ENCODE measurements at regions of chr5 and their contacts with region 1.

Region 1: GRCh38 chr5:98614341-98614740 is 159.1 kb upstream of the RGMB start:
- DNase-seq: no peak
- H3K4me3 ChIP-seq: no peak overlapping the region
- H3K27ac ChIP-seq: no peak overlapping the region
- H3K4me1 ChIP-seq: no peaks in the 10 kb centered on the region
- H3K27me3 ChIP-seq: no peaks in the 10 kb centered on the region
- CTCF ChIP-seq: no peak
- POLR2A ChIP-seq: no peak

Region 2: GRCh38 chr5:97425511-97425910 is 1188.8 kb before region 1 on chr5:
- CTCF ChIA-PET with region 1: no interaction called
- POLR2A ChIA-PET with region 1: no interaction called
- dilution Hi-C with region 1: no loop called
- intact Hi-C with region 1: loop called (anchors 10 kb)
- DNase-seq: peak; percentile 24
- H3K4me3 ChIP-seq: no peak overlapping the region
- H3K27ac ChIP-seq: no peak overlapping the region
- H3K4me1 ChIP-seq: no peaks in the 10 kb centered on the region
- H3K27me3 ChIP-seq: no peaks in the 10 kb centered on the region
- CTCF ChIP-seq: peak; percentile 36 to 43
- POLR2A ChIP-seq: no peak